ENCODE measurements at regions of chr3 and their contacts with region 1.

Region 1: DNA sequence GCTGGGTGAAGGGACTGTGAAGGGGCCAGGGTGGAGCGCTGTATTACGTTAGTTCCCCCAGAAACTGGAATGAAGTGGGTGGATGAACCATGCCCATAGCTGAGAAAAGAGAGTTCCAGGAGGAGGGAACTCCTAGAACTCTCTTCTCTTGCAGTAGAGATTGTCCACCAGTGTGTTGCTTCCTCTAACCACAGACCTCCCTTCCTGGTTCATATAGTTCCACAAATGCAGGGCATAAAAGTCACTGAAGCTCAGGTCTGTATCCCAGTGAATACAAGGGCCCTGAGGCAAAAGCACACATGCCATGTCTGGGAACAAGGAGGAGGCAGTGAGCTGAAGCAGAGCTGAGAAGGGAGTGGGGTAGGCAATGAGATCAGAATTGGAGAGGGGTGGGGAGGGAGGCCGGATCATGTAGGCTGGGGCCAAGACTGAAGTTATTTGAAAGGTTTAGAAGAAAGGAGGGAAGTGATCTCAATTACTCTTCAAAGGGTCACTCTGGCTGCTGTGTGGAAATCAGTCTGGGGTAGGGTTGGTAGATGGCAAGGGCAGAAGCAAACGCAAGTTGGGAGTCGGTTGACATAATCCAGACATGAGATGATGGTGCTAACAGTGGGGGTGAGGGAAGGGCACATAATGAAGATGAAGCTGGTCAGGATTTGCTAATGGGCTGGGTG is 6.5 kb downstream of the A4GNT start:
- DNase-seq: no peak
- ATAC-seq: peak; percentile 73
- H3K4me3 ChIP-seq: no peak overlapping the region
- H3K27ac ChIP-seq: no peak overlapping the region
- H3K4me1 ChIP-seq: no peaks in the 10 kb centered on the region
- H3K27me3 ChIP-seq: peaks cover 3% of the 10 kb centered on the region
- CTCF ChIP-seq: no peak

Region 2: DNA sequence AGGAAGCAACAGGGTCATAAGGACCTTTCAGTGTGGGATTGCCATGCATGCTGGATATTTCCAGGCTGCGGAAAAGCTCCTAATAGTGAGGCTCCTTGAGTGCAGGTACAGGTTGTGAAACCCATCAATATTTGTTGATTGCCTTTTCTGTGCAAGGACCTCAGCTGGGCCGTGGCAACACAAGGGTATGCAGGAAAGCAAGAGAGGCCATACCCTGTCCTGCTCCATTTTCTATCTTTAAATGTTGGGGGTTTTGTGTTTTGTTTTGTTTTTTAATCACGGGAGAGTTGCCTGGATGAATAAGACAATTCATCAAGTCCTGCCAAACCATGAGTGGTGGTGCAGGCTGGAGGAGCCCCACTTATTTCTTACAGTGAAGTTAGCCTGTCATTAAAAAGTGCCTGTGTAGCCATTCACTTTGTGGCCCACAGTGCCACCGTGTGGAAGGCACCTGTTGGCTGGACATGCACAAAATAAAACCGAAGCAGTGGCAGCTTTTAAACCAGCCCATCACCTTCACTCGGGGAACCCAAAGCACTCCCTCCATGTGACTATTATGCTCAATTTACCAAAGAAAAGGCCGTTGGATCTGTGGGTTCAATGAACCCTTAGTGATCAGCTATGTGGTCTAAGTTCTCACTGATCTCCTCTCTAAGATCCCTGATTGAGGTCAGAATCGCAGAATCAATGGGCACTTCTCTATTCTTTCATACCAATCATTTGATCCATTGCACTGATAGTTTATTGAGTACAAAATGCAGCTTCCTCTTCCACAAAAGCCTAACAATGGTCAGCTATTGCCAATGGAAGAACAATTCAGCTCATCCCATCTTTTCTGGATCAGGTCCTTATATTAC is 73.5 kb before region 1 on chr3:
- CTCF ChIA-PET with region 1: interaction called, 13 read pairs
- POLR2A ChIA-PET with region 1: interaction called, 3 read pairs
- in situ Hi-C with region 1: no loop called
- intact Hi-C with region 1: no loop called
- DNase-seq: peak; percentile 36
- ATAC-seq: peak; percentile 96
- H3K4me3 ChIP-seq: no peak overlapping the region
- H3K27ac ChIP-seq: no peak overlapping the region
- H3K4me1 ChIP-seq: no peaks in the 10 kb centered on the region
- H3K27me3 ChIP-seq: no peaks in the 10 kb centered on the region
- CTCF ChIP-seq: peak; percentile 94

Measured in Panc1 (cell line).